Posterior cingulate gyrus (tissue), 11 donors: ENCODE measurements at regions of chr19 and their contacts with region 1.

Region 1: DNA sequence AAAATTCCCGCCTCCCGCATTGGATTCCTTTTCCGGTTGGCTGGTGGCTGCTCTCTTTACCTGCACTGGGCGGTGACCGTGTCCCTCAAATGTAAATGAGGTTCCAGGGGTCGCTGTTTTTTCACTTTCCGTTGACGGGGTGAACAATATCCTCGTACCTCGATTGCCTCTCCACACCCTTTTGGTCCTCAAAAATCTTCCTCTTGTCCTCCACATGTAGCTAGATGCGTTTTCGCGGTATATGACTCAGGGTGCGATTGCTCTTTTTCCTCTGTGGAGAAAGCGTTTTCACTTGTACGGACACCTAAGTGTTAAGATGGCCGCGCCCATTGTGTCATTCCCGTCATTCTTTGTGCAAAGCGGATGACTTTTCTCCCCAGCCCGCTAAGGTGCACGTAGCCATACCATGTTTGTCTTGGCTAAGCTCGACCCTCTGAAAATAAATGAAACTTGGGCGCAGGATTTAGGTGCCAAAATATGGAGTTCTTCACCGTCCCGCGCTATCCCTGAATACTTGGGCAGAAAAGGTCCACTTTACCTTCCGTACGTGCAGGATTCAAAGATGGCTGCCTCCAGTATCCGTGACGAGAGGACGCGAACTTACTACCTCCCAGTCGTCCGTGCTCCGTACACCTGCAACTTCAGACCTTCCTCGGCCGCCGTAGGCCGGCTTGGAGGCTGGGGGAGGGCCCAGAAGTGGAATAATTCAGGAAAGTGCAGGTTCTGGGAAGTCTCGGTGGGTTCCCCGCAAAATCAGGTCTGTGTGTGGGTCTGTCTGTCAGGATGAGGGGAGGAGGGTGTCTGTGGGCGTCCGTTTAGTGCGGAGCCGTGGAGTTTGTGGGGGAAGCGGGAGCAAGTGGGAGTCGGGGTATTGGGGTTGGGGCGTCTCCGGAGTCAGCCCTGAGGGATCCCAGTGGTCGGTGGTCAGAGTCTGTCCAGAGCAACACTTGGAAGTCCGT is at the start of gene ZNF613:
- DNase-seq: peak; percentile 81 to 98 (median 88)

Region 2: DNA sequence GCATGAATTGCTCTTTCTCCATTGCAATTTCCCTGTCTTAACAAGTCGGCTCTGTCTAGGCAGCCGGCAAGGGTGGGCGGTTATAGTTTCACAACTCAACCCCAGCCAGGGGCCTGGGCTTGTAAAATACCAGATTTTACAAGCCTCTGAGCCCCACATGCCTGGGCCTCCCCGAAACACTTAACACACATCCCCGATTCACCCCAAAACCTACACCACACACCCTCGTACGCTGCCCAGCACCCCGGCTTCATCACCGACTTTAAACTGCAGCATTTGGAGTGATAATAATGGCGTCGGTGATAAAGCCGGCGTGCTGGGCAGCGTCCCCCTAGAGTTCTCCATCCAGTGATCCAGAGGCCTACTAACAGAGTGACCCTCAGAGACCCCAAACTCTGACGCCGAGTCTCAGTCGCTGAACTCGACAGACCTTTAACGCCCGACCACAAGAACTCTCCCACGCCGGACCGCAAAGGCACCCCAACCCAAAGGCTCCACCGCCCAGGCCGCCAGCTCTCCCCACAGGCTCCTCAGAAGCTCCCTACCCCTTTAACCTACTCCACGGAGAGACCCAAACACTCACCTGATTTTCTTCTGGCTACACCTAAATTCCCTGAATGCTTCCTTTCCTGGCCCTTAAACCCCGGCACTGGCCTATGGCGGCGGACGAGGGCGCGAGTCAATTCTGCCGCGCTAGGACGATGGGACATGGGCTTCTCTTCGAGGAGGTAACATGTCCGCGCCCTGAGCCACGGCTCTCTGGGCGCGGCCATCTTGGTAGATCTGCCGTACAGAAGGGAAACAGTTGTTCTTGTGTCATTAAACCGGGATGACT is 22.5 kb before region 1 on chr19 and contains the start of gene ZNF649:
- intact Hi-C with region 1: loop called (anchors 1 kb)
- DNase-seq: peak; percentile 64 to 97 (median 82)